ENCODE measurements at regions of chr1 and their contacts with region 1.

Region 1: GRCh38 chr1:111648806-111649205 is 29.2 kb downstream of the RAP1A start:
- DNase-seq: no peak
- CTCF ChIP-seq: no peak

Region 2: DNA sequence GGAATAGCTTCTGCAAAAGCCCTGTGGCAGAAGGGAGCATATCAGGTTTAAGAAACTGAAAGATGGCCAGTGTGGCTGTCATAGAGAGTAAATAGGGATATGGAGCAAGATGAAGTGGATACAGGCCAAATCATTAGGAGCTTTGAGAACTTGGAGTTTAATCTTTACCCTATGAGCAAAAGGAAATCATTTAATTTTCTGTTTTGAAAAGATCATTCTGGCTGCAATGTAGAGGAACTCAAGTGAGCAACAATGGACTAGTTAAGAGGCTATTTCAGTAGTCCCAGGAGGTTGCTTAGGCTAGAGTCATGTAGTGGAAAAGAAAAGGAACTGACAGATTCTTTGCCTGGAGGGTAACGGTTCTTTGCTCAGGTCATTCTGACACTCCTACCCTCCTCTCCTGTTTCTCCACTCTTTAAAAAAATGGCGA is 18.1 kb after region 1 on chr1:
- CTCF ChIA-PET with region 1: interaction called, 14 read pairs
- POLR2A ChIA-PET with region 1: interaction called, 5 read pairs
- DNase-seq: no peak
- CTCF ChIP-seq: no peak

Region 3: DNA sequence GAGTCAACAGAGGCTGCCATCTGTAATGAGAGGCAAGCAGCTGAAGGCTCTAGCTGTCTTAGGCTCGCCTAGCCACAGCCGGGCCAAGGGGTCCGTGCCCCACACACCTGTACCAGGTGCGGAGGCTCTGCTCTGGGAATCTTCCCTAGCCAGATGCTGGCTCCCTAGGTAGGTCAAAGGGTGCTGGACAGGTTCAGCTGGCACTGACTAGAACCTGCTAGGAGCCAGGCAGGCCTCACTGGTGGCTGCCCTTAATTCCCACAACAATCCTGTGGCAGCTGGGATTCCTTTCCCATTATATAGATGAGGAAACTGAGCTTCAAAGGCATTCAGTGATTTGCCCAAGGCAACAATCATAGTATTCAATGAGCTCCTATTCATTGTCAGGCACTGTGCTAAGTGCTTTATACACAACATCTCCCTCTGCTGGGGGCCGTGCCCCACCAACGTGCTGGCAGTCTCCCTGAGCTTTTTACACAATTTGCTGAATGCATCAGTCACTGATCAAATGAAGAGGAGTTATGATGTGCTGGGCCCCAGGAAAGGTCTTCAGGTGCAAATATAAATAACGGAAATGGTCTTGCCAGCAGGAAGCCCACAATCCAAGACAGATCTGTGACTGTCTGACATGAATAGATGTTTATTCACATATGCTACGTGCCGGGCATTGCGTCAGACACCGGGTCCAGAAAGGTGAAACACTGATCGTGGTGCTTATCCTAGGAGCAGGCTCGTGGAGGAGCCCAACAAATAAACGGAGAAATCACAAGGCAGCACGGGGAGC is 164.9 kb after region 1 on chr1:
- CTCF ChIA-PET with region 1: no interaction called
- POLR2A ChIA-PET with region 1: no interaction called
- DNase-seq: no peak
- CTCF ChIP-seq: peak; percentile 9

Measured in GM10248 (cell line).